ENCODE measurements at regions of chr10 and their contacts with region 1.

Region 1: DNA sequence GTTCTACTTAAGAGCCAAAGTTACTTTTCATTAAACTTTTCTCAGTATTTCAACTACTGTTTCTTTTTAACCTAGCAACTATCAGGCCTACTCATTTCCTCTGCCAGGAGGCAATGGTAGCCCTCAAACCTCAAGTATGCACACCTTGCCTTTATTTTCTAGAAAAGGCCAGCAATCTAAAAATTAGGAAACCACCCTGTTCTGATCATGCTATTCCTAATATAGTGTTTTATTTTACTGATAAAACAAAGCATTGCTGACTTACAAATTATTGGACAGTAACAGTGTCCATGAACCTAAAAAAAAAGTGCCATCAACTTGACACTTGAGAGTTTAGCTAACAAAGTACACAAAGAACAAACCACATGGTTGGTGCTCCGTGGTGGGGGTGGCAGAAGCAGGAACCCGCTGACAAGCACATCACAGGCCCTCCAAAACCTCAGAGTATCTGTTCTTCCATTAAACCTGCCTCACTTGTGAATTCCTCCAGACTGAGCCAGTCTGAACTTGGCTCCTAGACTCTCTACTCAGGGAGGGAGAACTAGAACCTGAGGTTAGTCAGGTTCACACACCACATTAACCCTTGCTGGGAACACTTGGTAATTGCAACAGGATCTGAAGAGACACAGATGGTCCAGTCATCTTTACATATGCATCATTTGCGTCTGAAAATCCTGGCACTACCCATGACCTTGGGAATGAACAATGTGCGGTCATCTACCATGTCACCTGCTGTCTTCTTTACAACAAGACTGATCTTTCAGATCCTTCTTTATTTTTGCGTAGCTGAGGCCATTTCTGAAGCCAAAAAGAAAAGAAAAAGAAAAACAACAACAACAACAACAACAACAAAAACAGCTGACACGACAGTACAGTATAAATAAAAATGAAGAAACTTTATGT is 31.9 kb downstream of the PIP4K2A start:
- DNase-seq: peak; percentile 23 to 88 (median 54)
- ATAC-seq: peak; percentile 57
- H3K4me3 ChIP-seq: peak overlapping the region; percentile 24
- H3K4me3 Mint-ChIP-seq: peak overlapping the region; percentile 61
- H3K27ac ChIP-seq: peak overlapping the region; percentile 66 to 75
- H3K27ac Mint-ChIP-seq: peak overlapping the region; percentile 99
- H3K4me1 ChIP-seq: peaks cover 75% of the 10 kb centered on the region
- H3K4me1 Mint-ChIP-seq: peaks cover 92% of the 10 kb centered on the region
- H3K27me3 ChIP-seq: no peaks in the 10 kb centered on the region
- H3K27me3 Mint-ChIP-seq: no peaks in the 10 kb centered on the region
- CTCF ChIP-seq: no peak

Region 2: DNA sequence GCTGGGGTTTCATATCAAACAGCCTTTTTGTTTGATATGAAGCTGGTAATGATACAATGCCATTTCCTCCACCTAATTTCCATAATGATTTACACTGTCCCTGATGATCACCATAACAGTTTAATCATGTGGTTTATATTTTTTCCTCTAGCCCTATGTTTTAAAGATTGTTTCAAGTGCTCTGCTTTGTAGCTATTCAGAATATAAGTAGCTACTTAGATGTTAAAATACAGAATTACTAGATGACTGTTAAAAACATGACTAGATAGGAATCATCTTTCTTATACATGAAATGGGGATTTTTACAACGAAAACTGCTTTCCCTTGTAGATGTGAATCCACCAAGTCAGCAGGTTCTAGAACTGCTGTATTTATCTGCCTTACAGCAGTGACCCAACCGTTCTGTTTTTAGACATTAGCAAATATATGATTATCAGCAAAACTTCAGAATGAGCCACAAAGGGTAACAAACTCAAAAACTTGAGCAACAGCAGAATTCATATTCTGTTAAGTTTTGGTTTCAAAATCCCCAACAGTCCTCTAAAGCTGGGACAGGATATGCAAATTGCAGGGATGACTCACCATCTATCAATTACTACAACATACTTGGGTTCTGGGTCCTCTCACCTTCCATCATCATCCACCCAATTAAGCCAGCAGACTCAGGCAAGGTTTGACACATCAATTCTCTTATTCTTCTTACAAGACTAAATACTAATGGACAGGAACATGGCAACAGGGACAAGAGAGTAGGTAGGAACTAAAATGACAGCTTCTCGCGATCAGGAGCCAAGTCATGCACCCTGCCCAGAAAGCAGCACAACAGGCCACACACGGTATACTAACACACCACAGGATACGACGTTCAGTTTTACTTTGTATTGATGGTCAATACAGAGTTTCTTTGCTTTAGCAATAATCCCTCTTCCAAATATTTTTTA is 52.0 kb before region 1 on chr10:
- CTCF ChIA-PET with region 1: no interaction called
- POLR2A ChIA-PET with region 1: interaction called, 24 read pairs
- intact Hi-C with region 1: no loop called
- DNase-seq: peak in 4 of 14 experiments; percentile 55 to 89 (median 86)
- ATAC-seq: peak; percentile 87
- H3K4me3 ChIP-seq: peak overlapping the region; percentile 42
- H3K4me3 Mint-ChIP-seq: peak overlapping the region; percentile 63
- H3K27ac ChIP-seq: peak overlapping the region; percentile 82 to 87
- H3K27ac Mint-ChIP-seq: peak overlapping the region; percentile 90
- H3K4me1 ChIP-seq: peaks cover 67% of the 10 kb centered on the region
- H3K4me1 Mint-ChIP-seq: peaks cover 99% of the 10 kb centered on the region
- H3K27me3 ChIP-seq: no peaks in the 10 kb centered on the region
- H3K27me3 Mint-ChIP-seq: no peaks in the 10 kb centered on the region
- CTCF ChIP-seq: no peak

Region 3: GRCh38 chr10:22655311-22655981 is 27.0 kb before region 1 on chr10:
- CTCF ChIA-PET with region 1: interaction called, 7 read pairs
- POLR2A ChIA-PET with region 1: interaction called, 33 read pairs
- intact Hi-C with region 1: loop called in 1 of 2 experiments (anchors 1 kb)
- DNase-seq: peak in 12 of 14 experiments; percentile 17 to 81 (median 51)
- ATAC-seq: peak; percentile 74
- H3K4me3 ChIP-seq: peak overlapping the region; percentile 27
- H3K4me3 Mint-ChIP-seq: peak overlapping the region; percentile 82
- H3K27ac ChIP-seq: peak overlapping the region; percentile 58 to 67
- H3K27ac Mint-ChIP-seq: peak overlapping the region; percentile 91
- H3K4me1 ChIP-seq: peaks cover 92% of the 10 kb centered on the region
- H3K4me1 Mint-ChIP-seq: peaks cover 96% of the 10 kb centered on the region
- H3K27me3 ChIP-seq: no peaks in the 10 kb centered on the region
- H3K27me3 Mint-ChIP-seq: no peaks in the 10 kb centered on the region
- CTCF ChIP-seq: no peak

Region 4: DNA sequence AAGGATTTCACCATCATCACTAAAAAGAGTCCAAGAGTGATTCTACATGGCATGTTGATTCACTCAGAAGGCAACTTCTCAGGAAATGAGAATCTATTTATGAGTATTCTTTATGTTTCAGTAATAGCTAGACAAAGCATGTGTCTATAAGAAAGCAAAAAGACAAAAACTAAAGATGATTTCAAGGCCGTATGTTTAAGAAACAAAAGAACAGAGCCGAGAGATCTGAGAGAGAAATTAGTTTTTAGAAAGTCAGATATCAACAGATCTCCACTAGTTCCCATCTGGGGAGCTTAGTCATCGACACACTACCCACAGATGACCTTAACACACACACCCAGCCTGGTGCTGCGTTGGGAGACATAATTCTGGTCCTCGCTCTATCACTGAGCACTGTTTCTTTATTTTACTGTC is 10.9 kb after region 1 on chr10:
- CTCF ChIA-PET with region 1: interaction called, 5 read pairs
- POLR2A ChIA-PET with region 1: interaction called, 15 read pairs
- intact Hi-C with region 1: no loop called
- DNase-seq: peak in 3 of 14 experiments; percentile 45 to 55 (median 51)
- ATAC-seq: peak; percentile 49
- H3K4me3 ChIP-seq: no peak overlapping the region
- H3K4me3 Mint-ChIP-seq: peak overlapping the region; percentile 54
- H3K27ac ChIP-seq: peak overlapping the region; percentile 8 to 16
- H3K27ac Mint-ChIP-seq: peak overlapping the region; percentile 99
- H3K4me1 ChIP-seq: peaks cover 53% of the 10 kb centered on the region
- H3K4me1 Mint-ChIP-seq: peaks cover 93% of the 10 kb centered on the region
- H3K27me3 ChIP-seq: no peaks in the 10 kb centered on the region
- H3K27me3 Mint-ChIP-seq: no peaks in the 10 kb centered on the region
- CTCF ChIP-seq: no peak

Region 5: GRCh38 chr10:22704471-22704911 is 22.0 kb after region 1 on chr10:
- CTCF ChIA-PET with region 1: interaction called, 3 read pairs
- POLR2A ChIA-PET with region 1: interaction called, 12 read pairs
- intact Hi-C with region 1: no loop called
- DNase-seq: no peak
- ATAC-seq: no peak
- H3K4me3 ChIP-seq: no peak overlapping the region
- H3K4me3 Mint-ChIP-seq: peak overlapping the region; percentile 63
- H3K27ac ChIP-seq: no peak overlapping the region
- H3K27ac Mint-ChIP-seq: peak overlapping the region; percentile 83
- H3K4me1 ChIP-seq: peaks cover 78% of the 10 kb centered on the region
- H3K4me1 Mint-ChIP-seq: peaks cover 99% of the 10 kb centered on the region
- H3K27me3 ChIP-seq: no peaks in the 10 kb centered on the region
- H3K27me3 Mint-ChIP-seq: no peaks in the 10 kb centered on the region
- CTCF ChIP-seq: no peak